IMR-90 (cell line): ENCODE measurements at regions of chr3 and their contacts with region 1.

Region 1: DNA sequence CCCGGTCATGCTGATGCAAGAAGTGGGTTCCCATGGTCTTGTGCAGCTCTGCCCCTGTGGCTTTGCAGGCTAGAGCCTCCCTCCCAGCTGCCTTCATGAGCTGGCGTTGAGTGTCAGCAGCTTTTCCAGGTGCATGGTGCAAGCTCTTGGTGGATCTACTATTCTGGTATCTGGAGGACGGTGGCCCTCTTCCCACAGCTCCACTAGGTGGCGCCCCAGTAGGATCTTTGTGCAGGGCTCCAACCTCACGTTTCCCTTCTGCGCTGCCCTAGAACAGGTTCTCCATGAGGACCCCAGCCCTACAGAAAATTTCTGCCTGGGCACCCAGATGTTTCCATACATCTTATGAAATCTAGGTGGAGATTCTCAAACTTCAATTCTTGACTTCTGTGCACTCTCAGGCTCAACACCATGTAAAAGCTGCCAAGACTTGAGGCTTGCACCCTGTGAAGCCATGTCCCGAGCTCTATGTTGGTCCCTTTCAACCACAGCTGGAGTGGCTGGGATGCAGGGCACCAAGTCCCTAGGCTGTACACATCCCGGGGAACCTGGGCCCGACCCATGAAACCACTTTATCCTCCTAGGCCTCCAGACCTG is 238.4 kb upstream of the MDFIC2 start:
- DNase-seq: peak; percentile 54
- ATAC-seq: peak; percentile 93
- H3K4me3 ChIP-seq: no peak overlapping the region
- H3K27ac ChIP-seq: no peak overlapping the region
- H3K4me1 ChIP-seq: no peaks in the 10 kb centered on the region
- H3K27me3 ChIP-seq: peaks cover 5% of the 10 kb centered on the region; the same call in 1 of the 2 replicates
- CTCF ChIP-seq: peak; percentile 67
- POLR2A ChIP-seq: no peak
- RAD21 ChIP-seq: peak; percentile 79

Region 2: DNA sequence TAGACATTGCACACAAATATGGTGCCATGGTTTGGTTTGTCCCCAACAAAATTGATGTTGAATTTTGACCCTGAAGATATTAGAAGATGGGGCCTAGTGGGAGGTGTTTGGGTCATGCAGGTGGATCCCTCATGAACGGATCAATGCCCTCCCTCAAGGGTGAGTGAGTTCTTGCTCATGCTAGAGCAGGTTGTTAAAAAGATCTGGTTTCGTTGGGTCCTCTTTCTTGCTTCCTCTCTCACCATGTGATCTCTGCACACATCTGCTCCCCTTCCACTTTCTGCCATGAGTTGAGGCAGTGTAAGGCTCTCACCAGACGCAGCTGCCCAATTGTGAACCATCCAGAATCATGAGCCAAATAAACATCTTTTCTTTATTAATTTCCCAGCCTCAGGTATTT is 150.6 kb before region 1 on chr3:
- CTCF ChIA-PET with region 1: no interaction called
- POLR2A ChIA-PET with region 1: no interaction called
- dilution Hi-C with region 1: no loop called
- in situ Hi-C with region 1: no loop called
- intact Hi-C with region 1: no loop called
- DNase-seq: no peak
- ATAC-seq: no peak
- H3K4me3 ChIP-seq: no peak overlapping the region
- H3K27ac ChIP-seq: no peak overlapping the region
- H3K4me1 ChIP-seq: no peaks in the 10 kb centered on the region
- H3K27me3 ChIP-seq: no peaks in the 10 kb centered on the region
- CTCF ChIP-seq: no peak
- POLR2A ChIP-seq: no peak
- RAD21 ChIP-seq: no peak

Region 3: DNA sequence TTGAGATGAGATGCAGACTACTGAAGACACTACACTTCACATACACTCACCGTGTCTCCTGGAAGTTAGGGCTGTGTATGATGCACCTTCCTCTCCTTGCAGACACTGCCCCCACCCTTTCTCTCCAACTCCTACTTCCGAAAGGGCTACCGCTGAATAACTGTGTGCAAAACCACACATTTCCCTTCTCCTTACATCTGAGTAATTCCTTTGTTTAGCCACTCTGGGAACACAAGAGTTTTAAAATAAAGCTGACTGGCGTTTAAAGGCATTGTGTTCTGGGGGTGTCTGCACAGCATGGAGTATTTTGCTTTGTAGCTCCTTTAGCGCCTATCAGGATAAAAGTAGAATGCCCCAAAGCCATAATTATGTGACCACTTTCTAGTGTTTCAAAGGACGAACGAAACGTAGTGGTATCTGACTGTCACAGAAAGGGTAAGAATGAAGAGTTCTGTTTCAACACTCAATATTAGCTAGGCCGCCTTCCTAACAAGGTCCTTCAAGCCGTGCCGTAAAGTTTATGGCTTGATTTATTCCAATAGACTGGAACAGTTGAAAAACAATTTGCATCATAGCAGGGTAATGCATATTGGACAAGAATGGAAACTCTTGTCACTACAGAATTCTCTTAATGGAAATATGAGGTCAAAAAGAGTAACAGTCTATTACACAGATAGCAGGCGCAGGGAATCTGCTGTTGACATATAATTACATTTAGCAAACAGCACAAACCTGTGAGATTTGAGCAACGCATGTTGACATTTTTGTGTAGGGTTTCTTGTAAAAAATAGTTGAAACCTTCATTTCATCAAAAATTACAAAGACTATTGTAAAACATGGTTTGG is 412.8 kb after region 1 on chr3:
- CTCF ChIA-PET with region 1: no interaction called
- POLR2A ChIA-PET with region 1: no interaction called
- dilution Hi-C with region 1: no loop called
- in situ Hi-C with region 1: no loop called
- intact Hi-C with region 1: loop called (anchors 10 kb)
- DNase-seq: no peak
- ATAC-seq: no peak
- H3K4me3 ChIP-seq: no peak overlapping the region
- H3K27ac ChIP-seq: no peak overlapping the region
- H3K4me1 ChIP-seq: 0 out of 2 replicates have a peak, but pooled peaks cover 2% of the 10 kb centered on the region
- H3K27me3 ChIP-seq: no peaks in the 10 kb centered on the region
- CTCF ChIP-seq: no peak
- POLR2A ChIP-seq: no peak
- RAD21 ChIP-seq: no peak

Region 4: GRCh38 chr3:71087143-71088018 is 536.6 kb after region 1 on chr3:
- CTCF ChIA-PET with region 1: no interaction called
- POLR2A ChIA-PET with region 1: no interaction called
- dilution Hi-C with region 1: no loop called
- in situ Hi-C with region 1: no loop called
- intact Hi-C with region 1: no loop called
- DNase-seq: peak; percentile 51
- ATAC-seq: no peak
- H3K4me3 ChIP-seq: no peak overlapping the region
- H3K27ac ChIP-seq: peak overlapping the region; percentile 39; the same call in 1 of the 2 replicates
- H3K4me1 ChIP-seq: peaks cover 16% of the 10 kb centered on the region
- H3K27me3 ChIP-seq: no peaks in the 10 kb centered on the region
- CTCF ChIP-seq: no peak
- POLR2A ChIP-seq: no peak
- RAD21 ChIP-seq: no peak